ENCODE measurements at regions of chr17 and their contacts with region 1.

Region 1: DNA sequence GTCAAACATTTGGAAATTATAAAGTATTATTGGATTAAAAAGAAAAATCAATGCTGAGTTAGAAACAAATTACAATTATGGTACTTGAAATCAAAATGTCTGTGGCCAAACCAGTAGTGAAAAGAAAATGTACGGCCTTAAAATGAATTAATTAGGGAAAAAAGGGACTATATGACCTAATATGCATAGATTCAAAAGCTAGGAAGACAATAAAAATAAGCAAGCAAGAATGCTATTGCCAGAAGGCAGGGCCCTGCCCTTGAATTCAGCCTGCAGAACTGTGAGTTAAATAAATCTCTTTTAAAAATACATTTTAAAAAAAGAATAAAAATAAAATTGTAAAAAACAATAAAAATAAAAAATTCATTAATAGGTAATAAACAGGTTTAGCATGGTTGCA is 88.7 kb downstream of the TRIM37 start:
- DNase-seq: no peak
- H3K4me3 Mint-ChIP-seq: no peak overlapping the region
- H3K27ac Mint-ChIP-seq: no peak overlapping the region
- H3K4me1 Mint-ChIP-seq: no peaks in the 10 kb centered on the region
- H3K27me3 Mint-ChIP-seq: no peaks in the 10 kb centered on the region

Region 2: GRCh38 chr17:58911722-58912343 is 106.2 kb before region 1 on chr17:
- CTCF ChIA-PET with region 1: no interaction called
- POLR2A ChIA-PET with region 1: no interaction called
- DNase-seq: no peak
- H3K4me3 Mint-ChIP-seq: no peak overlapping the region
- H3K27ac Mint-ChIP-seq: no peak overlapping the region
- H3K4me1 Mint-ChIP-seq: no peaks in the 10 kb centered on the region
- H3K27me3 Mint-ChIP-seq: peaks cover 21% of the 10 kb centered on the region

Region 3: DNA sequence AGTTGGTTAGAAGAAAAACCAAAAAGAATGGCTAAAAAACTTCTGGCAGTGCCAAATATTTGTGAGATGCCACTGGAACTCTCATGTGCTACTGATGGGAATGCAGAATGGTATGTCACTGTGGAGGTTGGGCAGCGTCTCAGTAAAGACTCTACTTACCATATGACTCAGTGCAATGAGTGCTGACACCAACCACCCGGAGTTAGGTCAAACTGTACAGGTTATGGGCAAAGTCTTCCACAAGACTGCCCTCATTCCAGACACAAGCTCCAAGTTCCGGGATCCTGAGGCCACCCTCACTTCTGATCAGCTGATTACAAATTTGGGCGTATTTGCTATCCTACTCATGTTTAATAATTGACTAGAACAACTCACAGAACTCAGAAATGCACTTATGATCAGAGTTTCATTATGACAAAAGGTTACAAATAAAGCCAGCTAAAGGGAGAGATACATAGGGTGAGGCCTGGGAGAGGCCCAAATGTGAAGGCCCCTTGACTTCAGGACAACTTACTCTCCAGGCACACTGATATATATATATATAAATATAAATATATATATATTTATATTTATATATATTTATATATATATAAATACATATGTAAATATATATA is 26.2 kb before region 1 on chr17:
- CTCF ChIA-PET with region 1: no interaction called
- POLR2A ChIA-PET with region 1: no interaction called
- DNase-seq: no peak
- H3K4me3 Mint-ChIP-seq: no peak overlapping the region
- H3K27ac Mint-ChIP-seq: no peak overlapping the region
- H3K4me1 Mint-ChIP-seq: peaks cover 4% of the 10 kb centered on the region
- H3K27me3 Mint-ChIP-seq: no peaks in the 10 kb centered on the region

Region 4: DNA sequence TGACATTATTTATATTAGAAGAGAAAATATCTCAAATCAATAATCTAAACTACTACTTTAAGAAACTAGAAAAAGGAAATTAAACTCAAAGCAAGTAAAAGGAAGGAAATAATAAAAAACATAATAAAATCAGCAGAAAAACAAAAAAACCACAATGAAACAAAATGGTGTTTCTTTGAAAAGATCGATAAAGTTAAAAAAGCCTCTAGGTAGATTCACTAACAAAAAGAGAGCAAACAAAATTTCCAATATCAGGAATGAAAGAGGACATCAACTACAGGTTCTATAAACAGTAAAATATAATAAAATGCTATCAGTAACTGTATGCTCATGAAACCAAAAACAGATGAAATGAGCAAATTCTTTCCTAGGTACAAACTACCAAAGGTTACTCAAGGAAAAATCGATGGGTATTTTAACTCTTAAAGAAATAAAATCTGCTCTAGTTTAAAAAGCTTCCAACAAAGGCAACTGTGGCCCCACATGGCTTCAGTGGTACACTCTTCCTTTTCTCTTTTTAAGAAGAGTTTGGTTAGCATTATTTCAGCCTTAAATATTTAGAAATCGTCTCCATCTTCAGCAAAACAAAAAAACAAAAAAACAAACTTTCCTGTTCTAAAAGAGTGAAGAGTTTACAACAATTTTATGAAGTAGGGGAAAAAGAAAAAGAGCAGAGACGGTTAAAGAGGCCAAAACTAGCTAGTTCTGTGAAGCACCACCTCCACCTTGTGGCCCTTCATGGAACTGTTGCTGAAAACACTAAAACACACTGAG is 13.5 kb before region 1 on chr17:
- CTCF ChIA-PET with region 1: interaction called, 14 read pairs
- POLR2A ChIA-PET with region 1: no interaction called
- DNase-seq: peak; percentile 74
- H3K4me3 Mint-ChIP-seq: no peak overlapping the region
- H3K27ac Mint-ChIP-seq: peak overlapping the region; percentile 61
- H3K4me1 Mint-ChIP-seq: peaks cover 28% of the 10 kb centered on the region
- H3K27me3 Mint-ChIP-seq: no peaks in the 10 kb centered on the region